CD8-positive, alpha-beta memory T cell (primary cell): ENCODE measurements at regions of chr1 and their contacts with region 1.

Region 1: DNA sequence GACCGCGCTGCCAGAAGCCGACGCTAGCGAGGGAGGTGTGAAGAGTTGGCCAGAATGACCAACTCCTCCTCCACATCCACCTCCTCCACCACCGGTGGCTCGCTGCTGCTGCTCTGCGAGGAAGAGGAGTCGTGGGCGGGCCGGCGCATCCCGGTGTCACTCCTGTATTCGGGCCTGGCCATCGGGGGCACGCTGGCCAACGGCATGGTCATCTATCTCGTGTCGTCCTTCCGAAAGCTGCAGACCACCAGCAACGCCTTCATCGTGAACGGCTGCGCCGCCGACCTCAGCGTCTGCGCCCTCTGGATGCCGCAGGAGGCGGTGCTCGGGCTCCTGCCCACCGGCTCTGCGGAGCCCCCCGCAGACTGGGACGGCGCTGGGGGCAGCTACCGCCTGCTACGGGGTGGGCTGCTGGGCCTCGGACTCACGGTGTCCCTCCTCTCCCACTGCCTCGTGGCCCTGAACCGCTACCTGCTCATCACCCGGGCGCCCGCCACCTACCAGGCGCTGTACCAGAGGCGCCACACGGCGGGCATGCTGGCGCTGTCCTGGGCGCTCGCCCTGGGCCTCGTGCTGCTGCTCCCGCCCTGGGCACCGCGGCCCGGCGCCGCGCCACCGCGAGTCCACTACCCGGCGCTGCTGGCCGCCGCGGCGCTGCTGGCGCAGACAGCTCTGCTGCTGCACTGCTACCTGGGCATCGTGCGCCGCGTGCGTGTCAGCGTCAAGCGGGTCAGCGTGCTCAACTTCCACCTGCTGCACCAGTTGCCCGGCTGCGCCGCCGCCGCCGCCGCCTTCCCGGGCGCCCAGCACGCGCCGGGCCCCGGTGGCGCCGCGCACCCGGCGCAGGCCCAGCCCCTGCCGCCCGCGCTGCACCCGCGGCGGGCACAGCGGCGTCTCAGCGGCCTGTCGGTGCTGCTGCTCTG is 1.2 kb downstream of the GPR88 start:
- DNase-seq: peak in 3 of 5 donors; percentile 21 to 46 (median 23)
- H3K4me3 ChIP-seq: peak overlapping the region; percentile 32
- H3K4me3 Mint-ChIP-seq: peak overlapping the region; percentile 49 to 87 (median 72)
- H3K27ac ChIP-seq: no peak overlapping the region
- H3K27ac Mint-ChIP-seq: no peak overlapping the region
- H3K4me1 ChIP-seq: peaks cover 8% of the 10 kb centered on the region
- H3K4me1 Mint-ChIP-seq: peaks cover 3 to 30% (median 5%) of the 10 kb centered on the region in 3 donors
- H3K27me3 ChIP-seq: peaks cover 15% of the 10 kb centered on the region
- H3K27me3 Mint-ChIP-seq: peaks cover 18 to 35% of the 10 kb centered on the region in 2 donors

Region 2: DNA sequence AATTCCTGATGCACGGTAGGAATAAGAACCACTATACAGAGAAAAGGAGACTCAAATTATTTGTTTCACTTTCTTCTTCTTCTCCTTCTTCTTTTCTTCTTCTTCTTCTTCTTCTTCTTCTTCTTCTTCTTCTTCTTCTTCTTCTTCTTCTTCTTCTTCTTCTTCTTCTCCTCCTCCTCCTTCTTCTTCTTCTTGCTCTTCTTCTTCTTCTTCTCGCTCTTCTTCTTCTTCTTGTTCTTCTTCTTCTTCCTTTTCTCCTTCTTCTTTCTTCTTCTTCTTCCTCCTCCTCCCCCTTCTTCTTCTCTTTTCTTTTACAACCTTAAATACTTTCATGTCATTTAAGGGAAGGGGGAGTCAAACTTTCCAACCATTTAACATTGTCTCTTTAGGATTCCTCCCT is 12.3 kb before region 1 on chr1:
- CTCF ChIA-PET with region 1: interaction called, 10 read pairs
- POLR2A ChIA-PET with region 1: interaction called, 3 read pairs
- DNase-seq: no peak
- H3K4me3 ChIP-seq: no peak overlapping the region
- H3K4me3 Mint-ChIP-seq: no peak overlapping the region
- H3K27ac ChIP-seq: no peak overlapping the region
- H3K27ac Mint-ChIP-seq: no peak overlapping the region
- H3K4me1 ChIP-seq: peaks cover 17% of the 10 kb centered on the region
- H3K4me1 Mint-ChIP-seq: peaks cover 15 to 28% (median 22%) of the 10 kb centered on the region in 3 donors
- H3K27me3 ChIP-seq: no peaks in the 10 kb centered on the region
- H3K27me3 Mint-ChIP-seq: no peaks in the 10 kb centered on the region